Dendritic cell treated with granulocyte-macrophage colony-stimulating factor and Interleukin-4, amounts not matched to agents 40 ng/mL and 50 ng/mL, for 4 days (primary cell): ENCODE measurements at regions of chr19 and their contacts with region 1.

Region 1: DNA sequence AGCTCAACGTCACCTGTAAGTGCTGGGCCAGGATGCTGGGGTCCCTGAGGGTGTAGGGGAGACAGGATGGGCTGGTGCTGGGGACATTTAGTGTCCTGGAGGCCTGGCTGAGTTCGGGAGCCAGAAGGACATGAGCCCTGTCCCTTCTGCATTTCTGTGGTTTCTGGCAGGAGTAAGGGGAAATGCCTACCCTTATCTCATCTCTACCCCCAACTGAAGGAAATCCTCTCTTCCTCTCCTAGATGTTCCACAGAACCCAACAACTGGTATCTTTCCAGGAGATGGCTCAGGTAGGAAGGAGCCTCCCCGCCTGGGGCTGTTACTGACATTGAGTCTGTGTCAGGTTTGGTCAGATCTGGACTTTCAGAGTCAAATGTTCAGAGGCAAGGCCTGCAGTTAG is 1.2 kb downstream of the CD33 start:
- H3K4me3 Mint-ChIP-seq: peak overlapping the region; percentile 82
- H3K27ac Mint-ChIP-seq: peak overlapping the region; percentile 86
- H3K4me1 Mint-ChIP-seq: peaks cover 74% of the 10 kb centered on the region
- H3K27me3 Mint-ChIP-seq: no peaks in the 10 kb centered on the region

Region 2: GRCh38 chr19:50739914-50740426 is 486.1 kb before region 1 on chr19:
- intact Hi-C with region 1: no loop called
- H3K4me3 Mint-ChIP-seq: no peak overlapping the region
- H3K27ac Mint-ChIP-seq: no peak overlapping the region
- H3K4me1 Mint-ChIP-seq: no peaks in the 10 kb centered on the region
- H3K27me3 Mint-ChIP-seq: peaks cover 31% of the 10 kb centered on the region

Region 3: GRCh38 chr19:51131780-51132680 is 94.0 kb before region 1 on chr19:
- intact Hi-C with region 1: no loop called
- H3K4me3 Mint-ChIP-seq: peak overlapping the region; percentile 34
- H3K27ac Mint-ChIP-seq: peak overlapping the region; percentile 79
- H3K4me1 Mint-ChIP-seq: peaks cover 85% of the 10 kb centered on the region
- H3K27me3 Mint-ChIP-seq: no peaks in the 10 kb centered on the region

Region 4: GRCh38 chr19:51210191-51210784 is 15.8 kb before region 1 on chr19:
- intact Hi-C with region 1: loop called (anchors 2 kb)
- H3K4me3 Mint-ChIP-seq: no peak overlapping the region
- H3K27ac Mint-ChIP-seq: peak overlapping the region; percentile 95
- H3K4me1 Mint-ChIP-seq: peaks cover 37% of the 10 kb centered on the region
- H3K27me3 Mint-ChIP-seq: no peaks in the 10 kb centered on the region

Region 5: DNA sequence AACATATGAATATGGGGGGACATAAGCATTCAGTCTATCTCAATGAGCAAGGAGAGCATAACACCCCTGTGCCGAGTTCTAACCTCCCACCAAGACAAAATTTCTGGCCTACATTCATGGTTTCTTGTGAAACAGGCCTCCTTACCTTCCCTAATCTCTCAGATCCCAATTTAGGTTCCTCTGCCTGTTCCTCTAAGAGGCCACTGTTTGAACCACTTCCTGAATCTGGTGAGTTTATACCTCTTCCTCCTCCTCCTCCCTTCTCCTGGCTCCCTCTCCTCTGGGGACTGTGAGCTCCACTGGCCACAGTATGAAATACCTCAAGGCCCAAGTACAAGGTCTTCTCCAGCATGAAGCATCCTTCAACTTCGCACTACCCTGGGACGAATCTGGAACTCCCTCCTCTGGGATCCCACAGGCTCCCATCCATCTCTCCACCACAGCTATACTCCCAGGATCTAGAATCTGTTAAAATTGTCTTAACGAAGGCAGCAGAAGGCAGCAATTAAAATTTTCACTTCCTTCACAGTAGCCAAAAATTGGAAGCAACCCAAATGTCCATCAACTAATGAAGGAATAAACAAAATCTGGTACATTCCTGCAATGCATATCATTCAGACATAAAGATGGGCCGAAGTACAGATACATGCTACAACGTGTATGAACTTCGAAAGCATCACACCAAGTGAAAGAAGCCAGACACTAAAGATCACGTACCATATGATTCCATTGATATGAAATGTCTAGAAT is 17.0 kb after region 1 on chr19:
- intact Hi-C with region 1: loop called (anchors 2 kb)
- H3K4me3 Mint-ChIP-seq: no peak overlapping the region
- H3K27ac Mint-ChIP-seq: peak overlapping the region; percentile 21
- H3K4me1 Mint-ChIP-seq: peaks cover 77% of the 10 kb centered on the region
- H3K27me3 Mint-ChIP-seq: no peaks in the 10 kb centered on the region